ENCODE measurements at regions of chr6 and their contacts with region 1.

Region 1: GRCh38 chr6:69555088-69555638 is 241.6 kb downstream of the LMBRD1 start:
- DNase-seq: no peak
- ATAC-seq: no peak
- H3K4me3 ChIP-seq: no peak overlapping the region
- H3K27ac ChIP-seq: no peak overlapping the region
- H3K4me1 ChIP-seq: no peaks in the 10 kb centered on the region
- H3K27me3 ChIP-seq: no peaks in the 10 kb centered on the region
- CTCF ChIP-seq: no peak

Region 2: DNA sequence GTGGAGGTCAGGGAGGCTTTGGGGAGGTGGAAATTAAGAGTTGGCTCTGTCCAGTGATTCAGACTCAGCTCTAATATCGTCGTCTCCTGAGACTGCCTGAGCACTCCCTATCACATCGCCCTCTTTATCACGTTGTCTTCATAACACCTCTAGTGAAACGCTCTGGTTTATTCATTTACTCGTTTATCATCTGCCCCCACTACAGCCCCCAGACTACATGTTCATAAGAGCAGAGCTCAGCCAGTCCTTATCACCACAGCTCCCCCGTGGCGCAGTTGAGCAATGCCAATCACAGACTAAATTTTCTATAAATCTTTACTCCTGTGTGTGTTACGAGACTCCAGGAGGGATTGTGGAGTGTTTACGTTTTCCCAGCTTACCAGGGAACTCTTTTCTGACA is 603.9 kb before region 1 on chr6:
- intact Hi-C with region 1: loop called in 1 of 10 experiments (anchors 2 kb)
- DNase-seq: no peak
- ATAC-seq: no peak
- H3K4me3 ChIP-seq: peak overlapping the region in 1 of 10 donors; percentile 6
- H3K27ac ChIP-seq: no peak overlapping the region
- H3K4me1 ChIP-seq: no peaks in the 10 kb centered on the region
- H3K27me3 ChIP-seq: no peaks in the 10 kb centered on the region
- CTCF ChIP-seq: no peak

Region 3: DNA sequence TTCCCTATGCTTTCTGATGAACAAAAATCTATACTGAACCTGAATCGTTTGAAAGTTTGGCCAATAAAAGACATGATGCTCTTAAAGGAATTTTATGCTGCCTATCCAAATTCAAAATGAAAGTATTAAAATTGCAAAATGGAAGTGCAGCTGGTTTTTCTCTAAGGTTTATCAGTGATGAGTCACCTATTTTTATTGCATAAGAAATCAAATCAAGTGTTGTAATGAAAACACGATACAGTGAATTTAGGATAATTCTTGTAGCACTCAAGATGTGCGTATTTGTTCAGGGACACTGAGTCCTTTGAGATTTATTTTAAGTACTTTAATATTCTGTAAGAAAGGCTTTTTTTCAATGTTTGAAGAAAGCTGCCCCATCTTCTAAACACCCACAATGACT is 510.6 kb before region 1 on chr6:
- intact Hi-C with region 1: no loop called
- DNase-seq: no peak
- ATAC-seq: no peak
- H3K4me3 ChIP-seq: no peak overlapping the region
- H3K27ac ChIP-seq: no peak overlapping the region
- H3K4me1 ChIP-seq: no peaks in the 10 kb centered on the region
- H3K27me3 ChIP-seq: no peaks in the 10 kb centered on the region
- CTCF ChIP-seq: no peak

Region 4: DNA sequence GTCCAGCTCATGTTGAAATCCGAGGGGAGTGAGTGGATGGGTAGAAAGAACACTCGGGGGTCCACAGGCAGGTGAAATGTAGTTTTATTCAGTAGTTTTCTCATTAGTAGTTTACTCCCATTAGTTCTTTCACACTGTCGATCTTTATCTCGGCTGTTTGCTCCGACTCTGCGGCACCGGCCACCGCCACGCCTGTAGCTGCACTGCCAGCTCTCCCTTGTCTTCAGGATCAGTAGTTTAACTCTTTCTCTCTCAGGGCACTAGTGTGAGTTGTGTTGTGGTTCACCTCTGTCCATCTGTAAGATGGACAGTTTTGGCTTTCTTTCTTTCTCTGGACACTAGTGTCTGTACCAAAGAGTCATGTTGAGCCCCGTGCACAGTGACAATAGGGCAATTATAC is 46.0 kb after region 1 on chr6:
- intact Hi-C with region 1: no loop called
- DNase-seq: no peak
- ATAC-seq: no peak
- H3K4me3 ChIP-seq: no peak overlapping the region
- H3K27ac ChIP-seq: no peak overlapping the region
- H3K4me1 ChIP-seq: no peaks in the 10 kb centered on the region
- H3K27me3 ChIP-seq: no peaks in the 10 kb centered on the region
- CTCF ChIP-seq: no peak

Measured in heart right ventricle (tissue), 16 donors.